ENCODE measurements at regions of chr10 and their contacts with region 1.

Region 1: DNA sequence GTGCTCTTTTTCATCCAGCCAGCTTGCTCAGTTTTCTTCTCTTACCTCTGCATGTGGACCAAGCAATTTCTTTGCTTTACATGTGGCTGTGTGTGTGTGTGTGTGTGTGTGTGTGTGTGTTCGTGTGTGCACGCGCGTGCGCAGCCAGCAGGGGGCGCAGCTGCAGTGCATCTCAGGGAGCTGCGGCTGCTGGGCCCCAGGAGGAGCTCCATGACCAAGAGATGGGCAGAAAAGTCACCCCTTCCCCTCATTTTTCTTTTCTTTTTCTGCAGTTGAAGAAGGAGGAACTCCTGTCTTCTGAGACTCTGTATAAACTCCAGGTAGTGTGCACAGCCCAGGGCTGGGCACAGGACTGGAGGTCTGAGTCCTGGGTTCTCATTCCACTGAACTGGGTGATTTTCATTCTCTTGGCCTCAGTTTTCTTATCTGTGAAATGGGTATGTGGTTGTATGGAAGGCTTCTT is 41.8 kb downstream of the BLNK start:
- DNase-seq: peak; percentile 48 to 82 (median 72)
- ATAC-seq: peak; percentile 73
- H3K4me3 ChIP-seq: no peak overlapping the region
- H3K4me3 Mint-ChIP-seq: no peak overlapping the region
- H3K27ac ChIP-seq: no peak overlapping the region
- H3K27ac Mint-ChIP-seq: peak overlapping the region; percentile 33
- H3K4me1 ChIP-seq: no peaks in the 10 kb centered on the region
- H3K4me1 Mint-ChIP-seq: peaks cover 1% of the 10 kb centered on the region
- H3K27me3 ChIP-seq: no peaks in the 10 kb centered on the region
- H3K27me3 Mint-ChIP-seq: no peaks in the 10 kb centered on the region
- CTCF ChIP-seq: peak; percentile 67

Region 2: DNA sequence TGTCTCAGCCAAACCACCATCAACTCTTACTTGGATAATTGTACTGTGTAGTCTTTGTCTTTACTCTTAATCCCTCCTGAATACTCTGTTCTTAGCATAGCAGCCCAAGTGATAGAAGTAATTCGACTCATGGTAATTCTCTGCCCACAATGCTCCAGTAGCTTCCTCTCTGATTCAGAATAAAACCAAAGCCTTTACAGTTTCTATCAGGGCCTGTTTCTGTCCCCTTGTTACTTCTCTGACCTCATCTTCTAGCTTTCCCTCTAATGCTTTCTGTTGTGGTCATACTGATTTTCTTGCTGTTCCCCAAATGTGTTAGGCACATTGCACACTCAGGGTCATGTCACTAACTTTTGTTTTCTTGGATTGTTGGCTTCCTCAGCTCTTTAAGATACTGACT is 91.5 kb before region 1 on chr10:
- CTCF ChIA-PET with region 1: no interaction called
- POLR2A ChIA-PET with region 1: no interaction called
- intact Hi-C with region 1: no loop called
- DNase-seq: no peak
- ATAC-seq: no peak
- H3K4me3 ChIP-seq: no peak overlapping the region
- H3K4me3 Mint-ChIP-seq: no peak overlapping the region
- H3K27ac ChIP-seq: no peak overlapping the region
- H3K27ac Mint-ChIP-seq: no peak overlapping the region
- H3K4me1 ChIP-seq: no peaks in the 10 kb centered on the region
- H3K4me1 Mint-ChIP-seq: peaks cover 11% of the 10 kb centered on the region
- H3K27me3 ChIP-seq: no peaks in the 10 kb centered on the region
- H3K27me3 Mint-ChIP-seq: no peaks in the 10 kb centered on the region
- CTCF ChIP-seq: no peak

Region 3: GRCh38 chr10:96212911-96213310 is 16.7 kb before region 1 on chr10:
- CTCF ChIA-PET with region 1: interaction called, 21 read pairs
- POLR2A ChIA-PET with region 1: no interaction called
- intact Hi-C with region 1: no loop called
- DNase-seq: no peak
- ATAC-seq: no peak
- H3K4me3 ChIP-seq: no peak overlapping the region
- H3K4me3 Mint-ChIP-seq: no peak overlapping the region
- H3K27ac ChIP-seq: no peak overlapping the region
- H3K27ac Mint-ChIP-seq: no peak overlapping the region
- H3K4me1 ChIP-seq: no peaks in the 10 kb centered on the region
- H3K4me1 Mint-ChIP-seq: no peaks in the 10 kb centered on the region
- H3K27me3 ChIP-seq: no peaks in the 10 kb centered on the region
- H3K27me3 Mint-ChIP-seq: no peaks in the 10 kb centered on the region
- CTCF ChIP-seq: no peak

Region 4: GRCh38 chr10:96299383-96299782 is 69.8 kb after region 1 on chr10:
- CTCF ChIA-PET with region 1: interaction called, 111 read pairs
- POLR2A ChIA-PET with region 1: interaction called, 3 read pairs
- intact Hi-C with region 1: no loop called
- DNase-seq: peak in 8 of 9 experiments; percentile 7 to 70 (median 31)
- ATAC-seq: peak; percentile 77
- H3K4me3 ChIP-seq: peak overlapping the region in 1 of 2 experiments; percentile 10
- H3K4me3 Mint-ChIP-seq: peak overlapping the region; percentile 38
- H3K27ac ChIP-seq: peak overlapping the region; percentile 11 to 38
- H3K27ac Mint-ChIP-seq: peak overlapping the region; percentile 90
- H3K4me1 ChIP-seq: peaks cover 56% of the 10 kb centered on the region
- H3K4me1 Mint-ChIP-seq: peaks cover 59% of the 10 kb centered on the region
- H3K27me3 ChIP-seq: no peaks in the 10 kb centered on the region
- H3K27me3 Mint-ChIP-seq: peaks cover 7% of the 10 kb centered on the region
- CTCF ChIP-seq: no peak

Region 5: GRCh38 chr10:96319754-96320474 is 90.3 kb after region 1 on chr10:
- CTCF ChIA-PET with region 1: interaction called, 36 read pairs
- POLR2A ChIA-PET with region 1: no interaction called
- intact Hi-C with region 1: no loop called
- DNase-seq: no peak
- ATAC-seq: no peak
- H3K4me3 ChIP-seq: no peak overlapping the region
- H3K4me3 Mint-ChIP-seq: no peak overlapping the region
- H3K27ac ChIP-seq: no peak overlapping the region
- H3K27ac Mint-ChIP-seq: no peak overlapping the region
- H3K4me1 ChIP-seq: no peaks in the 10 kb centered on the region
- H3K4me1 Mint-ChIP-seq: no peaks in the 10 kb centered on the region
- H3K27me3 ChIP-seq: no peaks in the 10 kb centered on the region
- H3K27me3 Mint-ChIP-seq: peaks cover 13% of the 10 kb centered on the region
- CTCF ChIP-seq: no peak

Region 6: GRCh38 chr10:96339957-96340904 is 110.6 kb after region 1 on chr10:
- CTCF ChIA-PET with region 1: interaction called, 64 read pairs
- POLR2A ChIA-PET with region 1: interaction called, 4 read pairs
- intact Hi-C with region 1: loop called (anchors 1 kb)
- DNase-seq: peak; percentile 8 to 73 (median 50)
- ATAC-seq: peak; percentile 72
- H3K4me3 ChIP-seq: no peak overlapping the region
- H3K4me3 Mint-ChIP-seq: no peak overlapping the region
- H3K27ac ChIP-seq: no peak overlapping the region
- H3K27ac Mint-ChIP-seq: no peak overlapping the region
- H3K4me1 ChIP-seq: no peaks in the 10 kb centered on the region
- H3K4me1 Mint-ChIP-seq: no peaks in the 10 kb centered on the region
- H3K27me3 ChIP-seq: no peaks in the 10 kb centered on the region
- H3K27me3 Mint-ChIP-seq: no peaks in the 10 kb centered on the region
- CTCF ChIP-seq: peak; percentile 69

Measured in CD8-positive, alpha-beta T cell (primary cell).